GM10248 (cell line): ENCODE measurements at regions of chr18 and their contacts with region 1.

Region 1: GRCh38 chr18:23703057-23703986 is 14.1 kb downstream of the LAMA3 start:
- DNase-seq: peak; percentile 45
- CTCF ChIP-seq: peak; percentile 45

Region 2: GRCh38 chr18:23619388-23619881 is 83.9 kb before region 1 on chr18:
- CTCF ChIA-PET with region 1: interaction called, 15 read pairs
- POLR2A ChIA-PET with region 1: no interaction called
- DNase-seq: peak; percentile 44
- CTCF ChIP-seq: peak; percentile 19

Region 3: GRCh38 chr18:23690505-23691068 is 12.7 kb before region 1 on chr18:
- CTCF ChIA-PET with region 1: interaction called, 25 read pairs
- POLR2A ChIA-PET with region 1: no interaction called
- DNase-seq: no peak
- CTCF ChIP-seq: no peak

Region 4: DNA sequence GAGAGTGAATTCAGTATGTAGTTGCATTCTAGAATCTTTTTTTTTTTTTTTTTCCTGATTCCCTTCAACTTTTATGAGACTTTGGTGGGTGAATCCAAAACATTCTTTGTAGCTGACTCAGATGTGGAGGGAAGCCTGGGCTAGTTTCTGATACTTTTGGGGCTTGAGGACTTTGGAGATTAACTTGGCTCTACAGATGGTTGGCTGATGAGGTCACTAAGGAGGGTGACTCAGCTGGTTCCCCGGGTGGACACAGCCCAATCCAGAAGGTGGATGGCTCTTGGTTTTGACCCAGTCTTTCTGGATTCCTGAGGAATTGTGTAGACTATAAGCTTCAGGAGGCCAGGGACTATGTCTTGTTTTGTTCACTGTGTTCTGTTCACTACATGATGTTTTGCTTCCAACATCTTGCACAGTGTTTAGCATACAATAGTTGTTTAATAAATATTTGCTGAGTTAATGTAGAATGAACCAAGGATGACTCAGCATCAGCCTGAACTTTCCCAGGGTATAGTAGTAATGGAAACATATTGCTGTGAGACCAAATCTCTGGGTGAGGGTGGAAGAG is 16.4 kb after region 1 on chr18:
- CTCF ChIA-PET with region 1: interaction called, 12 read pairs
- POLR2A ChIA-PET with region 1: no interaction called
- DNase-seq: no peak
- CTCF ChIP-seq: no peak

Region 5: GRCh38 chr18:23740105-23740830 is 36.9 kb after region 1 on chr18:
- CTCF ChIA-PET with region 1: no interaction called
- POLR2A ChIA-PET with region 1: no interaction called
- DNase-seq: no peak
- CTCF ChIP-seq: no peak

Region 6: DNA sequence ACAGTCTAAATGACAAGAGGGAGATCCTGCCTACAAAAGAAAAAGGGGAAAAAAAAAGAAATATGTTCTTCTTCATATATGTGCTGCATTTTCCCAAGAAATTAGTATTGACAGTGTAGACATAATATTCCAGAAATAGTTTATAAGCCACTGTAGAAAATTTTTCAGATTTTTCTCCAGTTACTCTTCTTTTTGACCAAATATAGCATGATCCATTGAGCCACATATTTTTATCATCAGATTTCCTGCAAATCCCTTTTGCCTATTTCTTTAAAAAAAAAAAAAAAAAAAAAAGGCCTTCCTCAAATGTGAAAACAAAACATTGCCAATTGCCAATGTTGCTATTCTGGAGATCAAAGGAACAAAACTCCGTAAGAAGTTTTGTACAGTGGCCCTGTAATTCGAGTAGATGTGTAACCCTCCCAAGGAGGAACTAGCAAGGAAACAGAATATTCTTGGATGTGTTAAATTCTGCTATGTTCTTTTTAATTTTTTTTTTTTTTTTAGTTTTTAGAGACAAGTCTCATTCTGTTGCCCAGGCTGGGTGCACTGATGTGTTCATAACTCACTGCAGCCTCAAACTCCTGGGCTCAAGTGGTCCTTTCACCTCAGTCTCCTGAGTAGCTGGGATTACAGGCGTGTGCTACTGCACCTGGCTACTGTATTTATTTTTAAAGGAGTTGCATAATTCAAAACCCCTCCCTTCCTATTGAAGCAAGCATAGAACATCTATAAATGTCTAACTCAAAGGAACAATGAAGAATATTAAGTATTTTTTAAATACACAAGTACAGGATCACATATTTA is 423.0 kb after region 1 on chr18:
- CTCF ChIA-PET with region 1: no interaction called
- POLR2A ChIA-PET with region 1: no interaction called
- DNase-seq: no peak
- CTCF ChIP-seq: no peak